Thyroid gland (tissue), 4 donors: ENCODE measurements at regions of chr10 and their contacts with region 1.

Region 1: GRCh38 chr10:71569775-71570588 is 149.6 kb downstream of the C10orf105 start:
- DNase-seq: peak; percentile 70 to 78
- H3K4me3 ChIP-seq: no peak overlapping the region
- H3K27ac ChIP-seq: no peak overlapping the region
- H3K4me1 ChIP-seq: no peaks in the 10 kb centered on the region
- H3K27me3 ChIP-seq: no peaks in the 10 kb centered on the region
- CTCF ChIP-seq: peak; percentile 75 to 82 (median 78)
- POLR2A ChIP-seq: no peak

Region 2: GRCh38 chr10:71383972-71384687 is 185.9 kb before region 1 on chr10:
- intact Hi-C with region 1: loop called (anchors 5 kb)
- DNase-seq: peak; percentile 71 to 73
- H3K4me3 ChIP-seq: no peak overlapping the region
- H3K27ac ChIP-seq: no peak overlapping the region
- H3K4me1 ChIP-seq: peaks cover 0 to 7% of the 10 kb centered on the region in 2 donors
- H3K27me3 ChIP-seq: no peaks in the 10 kb centered on the region
- CTCF ChIP-seq: peak; percentile 70 to 95 (median 83)
- POLR2A ChIP-seq: no peak

Region 3: GRCh38 chr10:71390461-71390835 is 179.5 kb before region 1 on chr10:
- intact Hi-C with region 1: loop called (anchors 5 kb)
- DNase-seq: no peak
- H3K4me3 ChIP-seq: no peak overlapping the region
- H3K27ac ChIP-seq: no peak overlapping the region
- H3K4me1 ChIP-seq: no peaks in the 10 kb centered on the region
- H3K27me3 ChIP-seq: no peaks in the 10 kb centered on the region
- CTCF ChIP-seq: no peak
- POLR2A ChIP-seq: no peak